ENCODE measurements at regions of chr3 and their contacts with region 1.

Region 1: DNA sequence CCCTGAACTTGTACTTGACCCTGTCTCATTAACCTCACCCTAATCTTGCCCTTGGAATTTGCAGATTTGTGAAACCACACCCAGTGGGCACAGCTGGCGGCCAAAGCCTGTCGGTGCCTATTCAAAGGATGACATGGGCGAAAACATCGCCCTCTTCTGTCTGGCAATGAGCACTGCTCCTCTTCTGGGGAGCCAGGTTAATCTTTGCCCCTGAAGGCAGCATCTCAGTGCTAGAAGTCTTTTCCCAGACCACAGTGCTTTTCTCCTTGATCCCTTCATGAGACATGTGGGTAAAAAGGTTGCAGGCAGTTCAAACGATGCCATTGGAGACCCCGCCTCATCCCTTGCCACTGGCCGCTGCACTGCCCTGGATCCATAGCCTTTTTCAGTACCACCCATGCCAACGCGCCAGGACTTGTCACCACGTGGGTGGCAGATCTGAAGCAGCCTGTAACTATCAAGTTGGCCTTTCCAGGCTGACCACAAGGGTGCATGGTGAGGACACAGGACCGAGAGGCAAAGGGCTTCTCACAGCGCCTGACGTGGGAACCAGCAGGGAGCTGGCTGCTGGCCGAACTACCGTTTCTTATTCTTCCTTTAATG is 6.5 kb upstream of the DNASE1L3 start:
- DNase-seq: peak; percentile 87
- ATAC-seq: peak; percentile 77
- H3K4me3 ChIP-seq: peak overlapping the region; percentile 46; the same call in 1 of the 2 replicates
- H3K27ac ChIP-seq: peak overlapping the region; percentile 82
- H3K4me1 ChIP-seq: peaks cover 60% of the 10 kb centered on the region
- H3K27me3 ChIP-seq: no peaks in the 10 kb centered on the region
- CTCF ChIP-seq: peak; percentile 95

Region 2: GRCh38 chr3:58188173-58188564 is 29.1 kb before region 1 on chr3:
- CTCF ChIA-PET with region 1: interaction called, 59 read pairs
- POLR2A ChIA-PET with region 1: interaction called, 3 read pairs
- intact Hi-C with region 1: loop called (anchors 1 kb)
- DNase-seq: peak; percentile 84
- ATAC-seq: peak; percentile 72
- H3K4me3 ChIP-seq: no peak overlapping the region
- H3K27ac ChIP-seq: peak overlapping the region; percentile 77
- H3K4me1 ChIP-seq: peaks cover 23% of the 10 kb centered on the region
- H3K27me3 ChIP-seq: no peaks in the 10 kb centered on the region
- CTCF ChIP-seq: no peak

Region 3: DNA sequence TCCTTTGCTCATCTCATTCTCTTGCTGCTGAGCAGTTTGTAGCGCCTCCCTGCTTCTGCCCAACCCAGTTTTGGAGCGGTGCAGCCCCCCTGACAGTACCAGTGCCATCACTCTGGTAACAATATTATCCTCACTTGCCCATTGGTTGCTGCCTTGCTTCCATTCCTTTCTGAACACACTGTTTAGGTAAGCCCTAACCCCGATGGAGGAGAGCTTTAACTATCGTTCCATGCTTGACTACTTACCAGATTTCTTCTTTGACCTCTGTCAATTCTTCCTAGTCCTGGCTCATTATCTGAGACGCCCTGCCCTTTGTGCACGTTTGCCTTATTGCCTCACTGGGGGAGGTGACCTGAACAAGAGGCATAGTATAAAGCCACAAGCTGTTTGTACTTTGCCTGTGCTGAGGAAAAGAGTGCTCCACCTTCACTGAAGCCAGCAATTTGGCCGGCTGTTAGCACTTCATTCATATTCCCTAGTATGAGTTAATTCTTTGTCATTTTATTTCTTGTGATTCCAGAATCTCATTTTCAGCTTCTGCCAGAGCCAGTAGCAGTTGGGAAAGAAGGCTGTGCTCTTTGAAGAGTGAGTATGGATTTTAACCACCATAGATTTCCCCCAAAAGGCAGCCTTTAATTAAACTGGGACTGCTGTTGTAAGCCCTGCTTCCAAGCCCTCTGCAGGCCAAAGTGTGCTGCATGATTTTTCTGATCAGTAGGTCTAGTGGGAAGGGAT is 32.2 kb after region 1 on chr3:
- CTCF ChIA-PET with region 1: no interaction called
- POLR2A ChIA-PET with region 1: no interaction called
- intact Hi-C with region 1: loop called (anchors 1 kb)
- DNase-seq: no peak
- ATAC-seq: no peak
- H3K4me3 ChIP-seq: no peak overlapping the region
- H3K27ac ChIP-seq: no peak overlapping the region
- H3K4me1 ChIP-seq: peaks cover 11% of the 10 kb centered on the region; the same call in 1 of the 2 replicates
- H3K27me3 ChIP-seq: no peaks in the 10 kb centered on the region
- CTCF ChIP-seq: peak; percentile 40; the same call in 1 of the 2 replicates

Region 4: GRCh38 chr3:58271901-58272501 is 54.7 kb after region 1 on chr3:
- CTCF ChIA-PET with region 1: no interaction called
- POLR2A ChIA-PET with region 1: no interaction called
- intact Hi-C with region 1: loop called (anchors 5 kb)
- DNase-seq: peak; percentile 82
- ATAC-seq: peak; percentile 100
- H3K4me3 ChIP-seq: peak overlapping the region; percentile 37; the same call in 1 of the 2 replicates
- H3K27ac ChIP-seq: peak overlapping the region; percentile 79
- H3K4me1 ChIP-seq: peaks cover 14% of the 10 kb centered on the region
- H3K27me3 ChIP-seq: no peaks in the 10 kb centered on the region
- CTCF ChIP-seq: no peak

Region 5: DNA sequence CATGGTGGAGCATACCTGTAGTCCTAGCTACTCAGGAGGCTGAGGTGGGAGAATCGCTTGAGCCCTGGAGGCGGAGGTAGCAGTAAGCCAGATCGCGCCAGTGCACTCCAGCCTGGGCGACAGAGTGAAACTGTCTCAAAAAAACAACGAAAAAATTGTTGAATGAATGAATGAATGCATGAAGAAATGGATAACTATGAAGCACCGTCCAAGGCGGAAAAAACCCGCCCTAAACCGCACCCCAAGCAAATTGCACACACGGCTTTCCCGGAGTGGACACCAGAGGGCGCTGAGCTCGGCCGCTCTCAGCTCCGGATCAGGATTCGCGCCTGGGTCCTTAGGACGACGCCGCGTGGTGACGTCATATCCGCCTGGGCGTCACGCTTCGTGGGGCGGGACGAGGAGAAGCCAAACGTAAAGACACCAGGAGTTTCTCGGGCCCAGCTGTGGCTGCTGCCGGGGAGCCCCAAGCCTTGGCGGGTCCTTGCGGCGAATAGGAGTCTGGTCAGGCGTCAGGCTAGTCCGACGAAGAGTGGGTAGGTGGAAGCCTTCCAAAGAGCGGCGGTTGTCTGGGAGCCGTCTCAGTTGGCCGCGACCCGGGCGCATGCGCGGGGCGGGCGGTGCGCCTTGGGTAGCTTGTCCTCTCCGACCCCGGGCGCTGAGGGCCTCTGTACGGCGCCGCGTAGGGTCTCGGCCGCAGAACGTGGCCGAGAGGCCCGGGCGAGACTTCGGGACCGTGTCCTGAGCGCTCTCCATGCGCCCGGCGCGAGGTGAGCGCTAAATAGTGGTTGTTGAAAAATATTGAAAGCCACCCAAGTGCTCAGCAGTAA is 88.8 kb after region 1 on chr3 and contains the starts of genes HTD2 and RPP14:
- CTCF ChIA-PET with region 1: interaction called, 12 read pairs
- POLR2A ChIA-PET with region 1: no interaction called
- intact Hi-C with region 1: no loop called
- DNase-seq: peak; percentile 99
- ATAC-seq: peak; percentile 92
- H3K4me3 ChIP-seq: peak within 1 kb of the TSS; percentile 95
- H3K27ac ChIP-seq: peak within 1 kb of the TSS; percentile 75
- H3K4me1 ChIP-seq: peaks cover 11% of the 10 kb centered on the region
- H3K27me3 ChIP-seq: no peaks in the 10 kb centered on the region
- CTCF ChIP-seq: peak; percentile 90
- total RNA-seq, gene HTD2: 4.9 and 6.9 TPM in 2 replicates
- total RNA-seq, gene RPP14: 28.8 and 30.0 TPM in 2 replicates

Region 6: GRCh38 chr3:58640700-58641372 is 423.5 kb after region 1 on chr3:
- CTCF ChIA-PET with region 1: no interaction called
- POLR2A ChIA-PET with region 1: no interaction called
- intact Hi-C with region 1: no loop called
- DNase-seq: peak; percentile 92
- ATAC-seq: peak; percentile 94
- H3K4me3 ChIP-seq: no peak overlapping the region
- H3K27ac ChIP-seq: no peak overlapping the region
- H3K4me1 ChIP-seq: peaks cover 22% of the 10 kb centered on the region
- H3K27me3 ChIP-seq: no peaks in the 10 kb centered on the region
- CTCF ChIP-seq: peak; percentile 96

Measured in PC-3 (cell line).